ENCODE measurements at regions of chr9 and their contacts with region 1.

Region 1: DNA sequence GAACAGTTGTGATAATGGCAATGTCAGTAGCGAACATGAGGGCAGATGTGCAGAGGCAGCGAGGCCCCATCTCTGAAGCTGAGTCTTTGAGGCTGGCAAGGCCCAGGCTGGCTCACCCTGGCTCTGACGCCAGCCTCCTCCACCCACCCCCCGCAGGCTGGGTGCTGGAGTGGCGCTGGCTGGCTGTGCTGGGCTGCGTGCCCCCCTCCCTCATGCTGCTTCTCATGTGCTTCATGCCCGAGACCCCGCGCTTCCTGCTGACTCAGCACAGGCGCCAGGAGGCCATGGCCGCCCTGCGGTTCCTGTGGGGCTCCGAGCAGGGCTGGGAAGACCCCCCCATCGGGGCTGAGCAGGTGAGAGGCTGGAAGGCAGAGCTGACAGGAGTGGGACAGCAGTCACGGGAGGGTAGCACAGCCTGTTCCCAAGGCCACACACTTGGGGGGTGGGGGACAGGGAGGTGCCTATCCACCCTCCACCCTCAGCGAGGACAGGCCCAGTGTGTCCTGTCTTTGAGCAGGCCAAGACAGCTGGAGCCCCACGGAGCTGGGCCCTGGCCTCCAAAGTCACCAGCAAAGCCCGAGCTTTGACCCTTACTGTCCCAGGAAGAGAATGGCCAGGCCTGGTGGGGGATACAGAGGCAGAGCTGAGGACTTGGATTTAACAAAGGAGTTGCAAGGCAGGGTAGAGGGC is 5.6 kb downstream of the SLC2A8 start:
- DNase-seq: no peak
- H3K27ac ChIP-seq: peak overlapping the region; percentile 0; the same call in 1 of the 2 replicates
- CTCF ChIP-seq: no peak

Region 2: DNA sequence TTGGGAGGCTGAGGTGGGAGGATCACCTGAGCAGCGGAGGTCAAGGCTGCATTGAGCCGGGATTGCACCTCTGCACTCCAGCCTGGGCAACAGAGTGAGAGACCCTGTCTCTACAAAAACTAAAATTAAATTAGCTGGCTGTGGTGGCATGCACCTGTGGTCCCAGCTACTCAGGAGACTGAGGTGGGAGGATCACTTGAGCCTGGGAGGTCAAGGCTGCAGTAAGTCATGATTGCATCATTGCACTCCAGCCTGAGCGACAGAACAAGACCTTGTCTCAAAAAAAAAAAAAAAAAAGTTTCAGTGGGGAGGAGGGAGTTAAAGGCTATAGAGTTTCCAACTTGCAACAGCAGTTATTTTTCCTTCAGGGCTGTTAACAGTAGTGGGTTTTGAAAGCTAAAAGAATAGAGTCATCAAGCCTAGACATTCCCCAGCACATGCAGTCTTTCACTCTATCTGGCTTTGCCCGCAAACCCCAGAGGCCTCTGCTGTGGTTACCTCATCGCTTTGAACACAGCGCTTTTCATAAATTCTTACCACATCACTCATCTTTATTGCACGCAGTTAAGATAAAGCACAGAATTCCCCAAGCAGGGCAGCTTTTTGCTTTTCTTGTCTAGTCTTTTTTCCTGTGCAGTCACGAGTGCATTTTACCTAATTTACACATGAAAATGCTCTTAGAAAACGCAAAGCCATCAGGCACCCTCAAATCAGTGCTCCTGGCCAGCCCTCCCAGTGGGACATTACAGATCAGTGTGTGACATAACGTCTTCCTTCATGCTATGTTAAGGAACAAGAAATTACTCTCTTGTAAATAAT is 14.3 kb before region 1 on chr9:
- CTCF ChIA-PET with region 1: interaction called, 10 read pairs
- POLR2A ChIA-PET with region 1: no interaction called
- DNase-seq: peak; percentile 97
- H3K27ac ChIP-seq: peak overlapping the region; percentile 93
- CTCF ChIP-seq: no peak

Region 3: GRCh38 chr9:127450830-127451724 is 48.5 kb after region 1 on chr9 and contains the starts of genes LRSAM1 and RPL12:
- CTCF ChIA-PET with region 1: interaction called, 3 read pairs
- POLR2A ChIA-PET with region 1: interaction called, 10 read pairs
- DNase-seq: peak; percentile 99
- H3K27ac ChIP-seq: peak within 1 kb of the TSS; percentile 93
- CTCF ChIP-seq: no peak

Region 4: GRCh38 chr9:127899128-127899946 is 496.8 kb after region 1 on chr9 and contains the start of gene ST6GALNAC6:
- CTCF ChIA-PET with region 1: no interaction called
- POLR2A ChIA-PET with region 1: no interaction called
- DNase-seq: peak; percentile 95
- H3K27ac ChIP-seq: peak within 1 kb of the TSS; percentile 84
- CTCF ChIP-seq: no peak